ENCODE measurements at regions of chr2 and their contacts with region 1.

Region 1: DNA sequence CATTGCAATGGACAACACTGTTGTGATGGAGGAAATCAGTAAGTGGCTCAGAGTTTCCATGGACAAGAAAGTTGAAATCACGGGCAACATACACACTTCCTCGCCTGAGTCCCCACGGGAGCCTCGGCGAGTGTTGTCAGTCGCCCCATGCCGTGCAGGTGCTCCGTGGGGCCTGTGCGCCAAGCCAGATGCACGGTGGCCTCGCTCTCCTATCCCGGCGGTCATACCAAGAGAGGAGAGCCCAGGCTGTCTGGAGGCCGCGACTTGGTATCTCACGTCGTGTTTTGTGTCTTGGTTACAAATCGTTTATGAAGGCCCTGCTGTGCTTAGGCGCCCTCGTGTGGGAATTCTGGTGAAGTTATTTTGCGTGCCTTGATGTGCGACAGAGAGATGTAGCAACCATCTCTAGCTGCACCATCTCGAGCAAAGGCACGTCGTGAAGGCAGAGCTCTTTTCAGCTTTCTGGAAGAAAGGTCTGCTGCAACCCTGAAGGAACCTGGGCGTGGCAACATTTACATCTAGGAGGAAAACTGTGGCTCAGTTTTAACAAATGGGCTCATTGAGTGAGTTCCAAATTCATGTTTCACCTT is 21.8 kb downstream of the ATG4B start:
- DNase-seq: peak; percentile 29
- H3K4me3 ChIP-seq: no peak overlapping the region
- H3K27ac ChIP-seq: no peak overlapping the region
- H3K27me3 ChIP-seq: no peaks in the 10 kb centered on the region
- CTCF ChIP-seq: peak; percentile 78

Region 2: DNA sequence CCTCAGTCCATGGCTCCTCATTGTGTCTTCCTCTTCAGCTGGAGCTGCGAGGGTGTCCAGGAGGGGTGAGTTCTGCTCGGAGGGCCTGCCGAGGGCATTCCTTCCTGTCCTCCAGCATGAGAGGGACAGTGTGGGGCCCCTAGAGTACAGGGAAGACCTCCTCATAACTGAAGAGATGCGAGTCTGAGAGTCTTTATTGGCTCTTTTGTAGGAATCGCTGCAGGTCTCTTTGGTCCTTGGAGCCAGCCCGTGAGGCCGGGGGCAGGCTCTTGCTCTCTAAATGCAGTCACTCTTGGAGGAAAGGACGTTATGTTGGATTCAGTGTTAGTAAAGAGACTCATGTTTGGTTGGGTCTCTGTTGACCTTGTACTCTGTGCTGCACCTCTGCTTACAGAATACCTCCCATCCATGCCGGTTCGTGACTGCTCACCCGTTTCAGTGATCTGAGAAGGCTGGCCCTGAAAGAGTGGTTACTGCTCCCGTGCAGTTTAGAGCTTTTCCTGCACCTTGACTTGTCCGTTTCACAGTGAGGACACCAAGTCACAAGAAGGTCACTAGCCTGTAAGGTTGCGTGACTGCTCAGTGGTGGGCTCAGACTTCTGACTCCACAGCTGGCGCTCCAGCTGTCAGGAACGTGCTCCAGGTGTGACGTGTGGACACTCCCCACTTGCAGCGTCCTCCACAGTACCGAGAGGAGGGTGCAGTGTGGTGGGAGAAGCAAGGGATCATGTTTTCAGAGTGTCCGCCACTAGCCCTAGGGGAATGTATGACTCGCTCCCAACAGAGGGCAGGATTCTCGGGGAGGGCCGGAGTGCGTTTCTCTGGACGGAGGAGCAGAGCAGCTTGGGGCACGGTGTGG is 14.0 kb before region 1 on chr2:
- CTCF ChIA-PET with region 1: interaction called, 13 read pairs
- POLR2A ChIA-PET with region 1: interaction called, 3 read pairs
- DNase-seq: no peak
- H3K4me3 ChIP-seq: no peak overlapping the region
- H3K27ac ChIP-seq: no peak overlapping the region
- H3K27me3 ChIP-seq: no peaks in the 10 kb centered on the region
- CTCF ChIP-seq: no peak